GM10248 (cell line): ENCODE measurements at regions of chr20 and their contacts with region 1.

Region 1: GRCh38 chr20:11210611-11211010 is 536.8 kb upstream of the JAG1 start:
- DNase-seq: no peak
- CTCF ChIP-seq: no peak

Region 2: DNA sequence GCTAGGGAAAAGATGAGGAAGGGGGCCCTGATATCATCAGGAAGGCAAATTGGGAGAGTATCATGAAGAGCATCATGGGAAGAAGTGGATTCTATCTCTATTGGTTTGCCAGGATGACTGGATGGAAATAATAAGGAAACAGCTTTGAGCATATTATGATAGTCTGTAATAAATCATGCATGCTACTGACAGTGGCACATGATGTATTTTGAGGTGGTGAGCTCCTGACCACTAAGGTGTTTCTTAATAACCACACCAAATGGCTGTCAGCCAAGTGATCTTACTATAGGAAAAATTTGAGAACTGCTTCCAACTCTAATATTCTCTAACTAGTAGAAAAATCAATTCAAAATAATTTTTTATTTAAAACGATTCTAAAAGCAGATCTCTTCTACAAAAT is 11.6 kb after region 1 on chr20:
- CTCF ChIA-PET with region 1: interaction called, 70 read pairs
- POLR2A ChIA-PET with region 1: no interaction called
- DNase-seq: no peak
- CTCF ChIP-seq: no peak